Common myeloid progenitor, CD34-positive (primary cell): ENCODE measurements at regions of chr3 and their contacts with region 1.

Region 1: DNA sequence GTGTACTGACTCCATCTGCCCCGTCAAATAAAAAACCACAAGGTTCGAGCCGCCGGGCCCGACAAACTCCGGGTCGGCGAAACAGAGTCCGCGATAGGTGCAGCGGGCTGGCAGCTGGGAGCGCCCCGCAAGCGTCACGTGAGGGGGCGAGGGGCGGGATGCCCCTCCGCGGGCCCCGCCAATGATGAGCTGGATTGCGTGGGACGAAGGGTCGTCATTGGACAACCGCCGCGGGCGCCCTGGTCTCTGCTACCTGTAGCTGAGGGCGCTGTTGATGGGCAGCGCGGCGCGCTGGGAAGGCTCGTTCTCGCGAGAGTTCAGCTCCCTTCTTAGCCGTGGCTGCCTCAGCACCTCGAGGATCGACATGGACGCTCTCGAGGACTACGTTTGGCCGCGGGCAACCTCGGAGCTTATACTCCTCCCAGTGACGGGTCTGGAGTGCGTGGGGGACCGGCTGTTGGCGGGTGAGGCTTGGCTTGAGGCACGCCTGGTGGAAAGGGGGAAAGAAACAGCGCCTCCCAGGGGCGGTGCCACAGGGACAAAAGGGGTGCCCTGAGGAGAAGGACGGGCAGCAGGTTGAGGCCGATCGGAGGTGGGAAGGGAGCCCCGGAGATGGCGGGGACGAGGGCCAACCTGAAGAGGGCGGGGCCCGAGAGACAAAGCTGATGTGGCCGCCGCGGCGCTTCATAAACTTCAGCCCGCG is at the start of gene WDR6:
- DNase-seq: peak; percentile 97 to 99 (median 99)
- H3K4me3 ChIP-seq: peak within 1 kb of the TSS; percentile 58 to 87 (median 83)
- H3K27ac ChIP-seq: peak within 1 kb of the TSS; percentile 85 to 94
- H3K4me1 ChIP-seq: peaks cover 1 to 23% (median 23%) of the 10 kb centered on the region in 4 experiments
- H3K27me3 ChIP-seq: no peaks in the 10 kb centered on the region

Region 2: DNA sequence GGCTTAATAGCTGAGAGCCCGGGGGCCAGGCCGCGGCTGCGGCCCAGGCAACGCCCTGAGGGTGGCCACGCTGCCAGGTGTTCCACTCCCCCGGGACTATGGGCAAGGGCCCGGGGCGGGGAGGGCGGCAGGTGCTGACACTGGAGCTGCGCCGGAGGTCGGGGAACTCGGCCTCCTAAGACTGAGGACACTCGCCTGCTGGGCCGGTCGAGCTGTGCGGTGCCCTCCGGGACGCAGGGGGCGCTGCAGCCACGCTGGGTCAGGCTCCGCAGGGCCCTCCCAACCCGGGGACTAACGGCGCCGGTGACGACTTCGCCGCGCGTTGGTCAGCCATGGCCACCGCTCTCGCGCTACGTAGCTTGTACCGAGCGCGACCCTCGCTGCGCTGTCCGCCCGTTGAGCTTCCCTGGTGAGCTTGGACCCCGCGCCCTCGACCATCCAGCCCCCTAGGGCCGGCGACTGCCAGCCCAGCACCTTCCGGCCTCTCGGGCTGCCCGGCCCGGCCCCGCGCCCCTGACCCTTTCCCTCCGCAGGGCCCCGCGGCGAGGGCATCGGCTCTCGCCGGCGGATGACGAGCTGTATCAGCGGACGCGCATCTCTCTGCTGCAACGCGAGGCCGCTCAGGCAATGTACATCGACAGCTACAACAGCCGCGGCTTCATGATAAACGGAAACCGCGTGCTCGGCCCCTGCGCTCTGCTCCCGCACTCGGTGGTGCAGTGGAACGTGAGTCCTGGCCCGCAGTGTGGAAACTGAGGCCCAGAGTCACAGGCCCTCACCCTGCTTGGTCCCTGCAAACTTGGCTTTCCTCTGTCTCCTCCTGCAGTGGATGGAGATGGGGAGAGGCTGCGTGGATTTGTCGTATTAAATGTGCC is 14.8 kb after region 1 on chr3 and contains the start of gene NDUFAF3:
- CTCF ChIA-PET with region 1: interaction called, 94 read pairs
- POLR2A ChIA-PET with region 1: interaction called, 42 read pairs
- DNase-seq: peak; percentile 91 to 93 (median 92)
- H3K4me3 ChIP-seq: peak within 1 kb of the TSS; percentile 73 to 94 (median 82)
- H3K27ac ChIP-seq: peak within 1 kb of the TSS; percentile 95 to 98
- H3K4me1 ChIP-seq: peaks cover 6 to 70% (median 52%) of the 10 kb centered on the region in 4 experiments
- H3K27me3 ChIP-seq: no peaks in the 10 kb centered on the region